Breast epithelium (tissue), 4 donors: ENCODE measurements at regions of chr1 and their contacts with region 1.

Region 1: GRCh38 chr1:6832531-6833188 is 47.4 kb downstream of the CAMTA1 start:
- DNase-seq: no peak
- H3K4me3 ChIP-seq: no peak overlapping the region
- H3K27ac ChIP-seq: no peak overlapping the region
- H3K4me1 ChIP-seq: no peaks in the 10 kb centered on the region
- H3K27me3 ChIP-seq: no peaks in the 10 kb centered on the region
- CTCF ChIP-seq: no peak
- POLR2A ChIP-seq: no peak

Region 2: GRCh38 chr1:6475381-6476133 is 357.1 kb before region 1 on chr1:
- intact Hi-C with region 1: no loop called
- DNase-seq: peak in 1 of 2 donors; percentile 42
- H3K4me3 ChIP-seq: no peak overlapping the region
- H3K27ac ChIP-seq: no peak overlapping the region
- H3K4me1 ChIP-seq: no peaks in the 10 kb centered on the region
- H3K27me3 ChIP-seq: no peaks in the 10 kb centered on the region
- CTCF ChIP-seq: peak; percentile 71 to 82 (median 81)
- POLR2A ChIP-seq: no peak

Region 3: DNA sequence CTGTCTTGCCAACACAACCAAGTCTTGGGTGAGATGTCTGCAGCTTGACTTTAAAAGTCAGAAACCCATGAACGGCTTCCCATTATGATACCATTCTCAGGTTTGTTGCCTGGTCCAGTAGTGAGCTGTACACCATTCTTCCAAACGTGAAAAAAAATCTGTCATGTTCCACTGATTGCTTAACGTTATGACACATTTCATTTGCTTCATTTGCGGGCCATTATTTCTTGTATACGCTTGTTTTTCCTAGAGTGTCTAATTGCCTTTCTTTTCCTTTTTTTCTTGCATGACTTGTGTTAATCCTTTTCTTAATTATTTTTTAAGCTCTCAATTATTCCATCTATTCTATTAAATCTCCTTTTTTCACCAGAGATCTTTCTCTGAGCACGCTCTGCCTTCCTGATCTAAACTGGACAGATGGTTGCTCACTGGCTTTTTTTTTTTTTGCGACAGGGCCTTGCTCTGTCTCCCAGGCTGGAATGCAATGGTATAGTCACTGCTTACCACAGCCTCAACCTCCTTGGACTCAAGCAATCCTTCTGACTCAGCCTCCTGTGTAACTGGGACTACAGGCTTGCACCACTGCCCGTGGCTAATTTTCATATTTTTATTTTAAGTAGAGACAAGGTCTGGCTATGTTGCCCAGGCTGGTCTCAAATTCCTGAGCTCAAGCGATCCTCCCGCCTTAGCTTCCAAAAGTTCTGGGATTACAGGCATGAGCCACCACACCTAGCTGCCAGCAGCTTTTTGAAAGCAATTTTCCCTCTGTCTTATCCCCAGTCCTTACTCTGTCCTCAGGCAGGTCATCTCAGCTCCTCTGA is 79.1 kb before region 1 on chr1:
- intact Hi-C with region 1: no loop called
- DNase-seq: no peak
- H3K4me3 ChIP-seq: no peak overlapping the region
- H3K27ac ChIP-seq: no peak overlapping the region
- H3K4me1 ChIP-seq: no peaks in the 10 kb centered on the region
- H3K27me3 ChIP-seq: no peaks in the 10 kb centered on the region
- CTCF ChIP-seq: no peak
- POLR2A ChIP-seq: no peak

Region 4: DNA sequence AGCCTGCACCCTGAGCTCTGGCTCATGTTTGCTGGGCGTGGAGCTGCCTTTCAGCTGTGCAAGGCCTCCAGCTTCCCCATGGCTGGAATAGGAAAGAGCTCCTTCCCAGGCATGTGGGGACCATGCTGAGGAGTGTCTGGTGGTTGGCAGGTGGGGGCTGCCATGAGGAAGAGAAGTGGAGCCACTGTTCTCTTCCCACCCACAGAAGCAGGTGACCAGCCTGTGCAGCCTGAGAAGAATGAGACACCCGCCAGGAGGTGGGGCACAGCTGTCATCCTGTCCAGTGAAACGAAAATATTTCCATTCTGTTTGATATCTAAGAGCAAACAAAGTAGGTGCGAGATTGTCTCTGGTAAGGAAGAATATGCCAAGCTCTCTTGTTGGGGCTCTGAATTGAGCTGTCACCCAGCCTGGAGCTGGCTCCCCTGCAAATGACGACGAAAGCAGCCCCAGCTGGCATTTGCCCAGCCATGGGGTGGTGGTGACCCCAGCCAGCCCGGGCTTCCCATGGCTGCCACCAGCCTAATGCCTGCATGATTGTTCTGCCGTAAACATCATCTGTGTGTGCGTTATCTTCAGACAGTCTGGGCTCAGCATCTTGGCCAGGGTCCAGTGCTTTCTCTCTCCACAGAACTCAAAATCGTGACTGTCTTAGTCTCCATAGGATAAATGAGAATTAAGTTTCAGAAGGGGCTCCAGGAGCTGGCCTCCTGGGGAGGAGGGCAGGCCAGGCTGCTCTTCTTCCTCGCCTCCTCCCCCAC is 508.7 kb after region 1 on chr1:
- intact Hi-C with region 1: no loop called
- DNase-seq: no peak
- H3K4me3 ChIP-seq: no peak overlapping the region
- H3K27ac ChIP-seq: no peak overlapping the region
- H3K4me1 ChIP-seq: no peaks in the 10 kb centered on the region
- H3K27me3 ChIP-seq: no peaks in the 10 kb centered on the region
- CTCF ChIP-seq: no peak
- POLR2A ChIP-seq: no peak

Region 5: DNA sequence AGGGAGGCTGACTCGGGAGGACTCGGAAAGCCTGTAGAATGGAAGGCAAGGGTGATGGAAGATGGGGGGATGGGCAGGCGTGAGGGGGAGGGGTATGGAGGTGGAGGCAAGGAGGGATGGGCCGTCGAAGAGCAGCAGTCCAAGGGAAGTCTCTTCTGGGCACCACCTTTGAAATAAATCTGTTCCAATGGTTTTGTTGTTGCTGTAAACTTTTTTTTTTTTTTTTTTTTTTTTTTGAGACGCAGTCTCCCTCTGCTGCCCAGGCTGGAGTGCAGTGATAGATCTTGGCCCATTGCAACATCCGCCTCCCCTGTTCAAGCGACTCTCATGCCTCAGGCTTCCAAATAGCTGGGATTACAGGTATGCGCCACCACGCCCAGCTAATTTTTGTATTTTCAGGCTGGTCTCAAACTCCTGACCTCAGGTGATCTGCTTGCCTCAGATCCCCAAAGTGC is 1406.2 kb after region 1 on chr1:
- intact Hi-C with region 1: loop called (anchors 10 kb)
- DNase-seq: peak; percentile 60 to 85
- H3K4me3 ChIP-seq: no peak overlapping the region
- H3K27ac ChIP-seq: peak overlapping the region; percentile 72 to 83
- H3K4me1 ChIP-seq: peaks cover 0 to 3% of the 10 kb centered on the region in 2 donors
- H3K27me3 ChIP-seq: no peaks in the 10 kb centered on the region
- CTCF ChIP-seq: peak in 2 of 3 donors; percentile 7 to 38
- POLR2A ChIP-seq: no peak